IMR-90 (cell line): ENCODE measurements at regions of chr3 and their contacts with region 1.

Region 1: DNA sequence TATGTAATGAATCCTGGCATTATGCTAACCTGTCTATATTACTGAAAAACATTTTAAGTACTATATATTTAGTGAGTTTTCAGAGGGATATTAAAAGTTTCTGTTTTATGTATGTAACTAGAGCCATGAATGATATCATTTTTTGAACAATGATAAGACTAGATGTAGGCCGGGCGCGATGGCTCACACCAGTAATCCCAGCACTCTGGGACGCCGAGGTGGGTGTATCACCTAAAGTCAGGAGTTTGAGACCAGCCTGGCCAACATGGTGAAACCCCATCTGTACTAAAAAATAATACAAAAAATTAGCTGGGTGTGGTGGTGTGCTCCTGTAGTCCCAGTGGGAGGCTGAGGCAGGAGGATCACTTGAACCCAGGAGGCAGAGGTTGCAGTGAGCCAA is 34.1 kb downstream of the DHX36 start:
- DNase-seq: no peak
- ATAC-seq: no peak
- H3K4me3 ChIP-seq: no peak overlapping the region
- H3K27ac ChIP-seq: no peak overlapping the region
- H3K4me1 ChIP-seq: no peaks in the 10 kb centered on the region
- H3K27me3 ChIP-seq: no peaks in the 10 kb centered on the region
- CTCF ChIP-seq: no peak
- POLR2A ChIP-seq: no peak
- RAD21 ChIP-seq: no peak

Region 2: GRCh38 chr3:154235330-154235729 is 54.9 kb before region 1 on chr3:
- CTCF ChIA-PET with region 1: no interaction called
- POLR2A ChIA-PET with region 1: no interaction called
- dilution Hi-C with region 1: no loop called
- in situ Hi-C with region 1: no loop called
- intact Hi-C with region 1: no loop called
- DNase-seq: peak; percentile 61
- ATAC-seq: no peak; the same call in 1 of the 2 replicates
- H3K4me3 ChIP-seq: no peak overlapping the region
- H3K27ac ChIP-seq: no peak overlapping the region
- H3K4me1 ChIP-seq: no peaks in the 10 kb centered on the region
- H3K27me3 ChIP-seq: no peaks in the 10 kb centered on the region
- CTCF ChIP-seq: no peak
- POLR2A ChIP-seq: no peak
- RAD21 ChIP-seq: no peak

Region 3: DNA sequence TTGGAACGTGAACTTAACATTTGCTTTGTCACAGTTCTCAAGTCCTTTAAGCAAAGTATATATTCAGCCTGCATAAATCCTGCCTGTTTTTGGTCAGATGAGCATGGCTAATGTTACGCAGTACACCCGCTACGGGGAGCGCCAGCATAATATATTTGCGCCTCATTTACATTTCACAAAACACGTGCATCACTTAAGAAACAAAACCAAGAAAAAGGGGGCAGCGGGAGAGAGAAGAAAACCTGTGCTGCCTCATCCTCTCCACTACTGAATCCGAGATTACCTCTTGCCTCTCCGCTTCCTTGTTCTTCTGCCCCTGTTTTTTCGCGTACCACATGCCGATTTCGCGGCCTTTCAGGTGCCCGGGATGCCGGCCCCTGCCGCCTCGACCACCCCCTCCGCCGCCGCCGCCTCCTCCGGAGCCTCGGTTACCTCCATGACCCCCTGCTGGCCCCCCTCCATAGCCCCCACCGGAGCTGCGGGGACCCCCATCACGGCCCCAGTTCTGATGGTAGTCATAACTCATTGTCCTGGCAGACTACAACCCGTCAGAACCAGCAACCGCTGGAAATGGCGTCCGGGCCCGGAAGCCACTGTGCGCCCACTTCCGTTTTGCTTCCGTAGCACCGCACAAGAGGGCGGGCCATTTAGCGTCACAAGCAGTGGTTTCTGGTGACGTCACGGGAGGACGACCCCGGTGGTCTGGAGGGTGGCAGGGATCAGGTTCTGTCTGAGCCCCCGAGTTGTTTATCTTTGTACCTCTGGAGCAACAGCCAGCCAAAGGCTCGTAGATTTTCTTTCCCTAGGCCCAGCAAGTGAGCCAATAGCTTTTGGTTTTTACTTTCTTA is 33.9 kb after region 1 on chr3 and contains the start of gene DHX36:
- CTCF ChIA-PET with region 1: interaction called, 10 read pairs
- POLR2A ChIA-PET with region 1: interaction called, 6 read pairs
- dilution Hi-C with region 1: no loop called
- in situ Hi-C with region 1: no loop called
- intact Hi-C with region 1: no loop called
- DNase-seq: peak; percentile 93
- ATAC-seq: peak; percentile 94
- H3K4me3 ChIP-seq: peak within 1 kb of the TSS; percentile 75
- H3K27ac ChIP-seq: peak within 1 kb of the TSS; percentile 72
- H3K4me1 ChIP-seq: no peaks in the 10 kb centered on the region
- H3K27me3 ChIP-seq: no peaks in the 10 kb centered on the region
- CTCF ChIP-seq: no peak
- POLR2A ChIP-seq: peak; percentile 92
- RAD21 ChIP-seq: no peak
- total RNA-seq, gene DHX36: 27.1 and 34.7 TPM in 2 replicates

Region 4: GRCh38 chr3:154939334-154939733 is 649.1 kb after region 1 on chr3:
- CTCF ChIA-PET with region 1: no interaction called
- POLR2A ChIA-PET with region 1: no interaction called
- dilution Hi-C with region 1: no loop called
- in situ Hi-C with region 1: no loop called
- intact Hi-C with region 1: no loop called
- DNase-seq: no peak
- ATAC-seq: no peak
- H3K4me3 ChIP-seq: no peak overlapping the region
- H3K27ac ChIP-seq: no peak overlapping the region
- H3K4me1 ChIP-seq: no peaks in the 10 kb centered on the region
- H3K27me3 ChIP-seq: no peaks in the 10 kb centered on the region
- CTCF ChIP-seq: no peak
- POLR2A ChIP-seq: no peak
- RAD21 ChIP-seq: no peak